Activated B cell treated with CpG ODN at 0.5 μM for 24 hours (primary cell): ENCODE measurements at regions of chr16 and their contacts with region 1.

Region 1: DNA sequence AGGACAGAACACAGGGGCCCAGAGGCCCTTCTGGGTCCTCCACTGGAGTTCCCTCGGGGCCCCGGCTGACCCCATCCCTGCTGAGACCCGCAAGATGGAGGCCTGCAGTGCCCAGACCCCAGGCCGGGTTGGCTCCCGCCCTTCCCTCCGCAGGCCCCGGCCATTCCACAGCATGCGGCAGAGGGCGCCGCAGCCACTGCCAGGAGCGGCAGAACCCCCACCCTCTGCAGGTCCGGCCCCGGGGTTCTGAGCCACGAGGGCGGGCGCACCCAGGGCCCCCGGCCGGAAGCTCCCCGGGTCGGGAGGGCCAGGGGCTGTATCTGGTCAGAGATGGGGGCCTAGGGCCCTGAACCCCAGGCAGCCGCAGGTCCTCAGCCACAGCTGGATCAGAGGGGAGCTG is 2.4 kb upstream of the PERCC1 start:
- DNase-seq: peak; percentile 62
- ATAC-seq: peak; percentile 93
- H3K4me3 Mint-ChIP-seq: no peak overlapping the region
- H3K27ac Mint-ChIP-seq: no peak overlapping the region
- H3K4me1 Mint-ChIP-seq: peaks cover 4% of the 10 kb centered on the region
- H3K27me3 Mint-ChIP-seq: no peaks in the 10 kb centered on the region
- CTCF ChIP-seq: no peak

Region 2: DNA sequence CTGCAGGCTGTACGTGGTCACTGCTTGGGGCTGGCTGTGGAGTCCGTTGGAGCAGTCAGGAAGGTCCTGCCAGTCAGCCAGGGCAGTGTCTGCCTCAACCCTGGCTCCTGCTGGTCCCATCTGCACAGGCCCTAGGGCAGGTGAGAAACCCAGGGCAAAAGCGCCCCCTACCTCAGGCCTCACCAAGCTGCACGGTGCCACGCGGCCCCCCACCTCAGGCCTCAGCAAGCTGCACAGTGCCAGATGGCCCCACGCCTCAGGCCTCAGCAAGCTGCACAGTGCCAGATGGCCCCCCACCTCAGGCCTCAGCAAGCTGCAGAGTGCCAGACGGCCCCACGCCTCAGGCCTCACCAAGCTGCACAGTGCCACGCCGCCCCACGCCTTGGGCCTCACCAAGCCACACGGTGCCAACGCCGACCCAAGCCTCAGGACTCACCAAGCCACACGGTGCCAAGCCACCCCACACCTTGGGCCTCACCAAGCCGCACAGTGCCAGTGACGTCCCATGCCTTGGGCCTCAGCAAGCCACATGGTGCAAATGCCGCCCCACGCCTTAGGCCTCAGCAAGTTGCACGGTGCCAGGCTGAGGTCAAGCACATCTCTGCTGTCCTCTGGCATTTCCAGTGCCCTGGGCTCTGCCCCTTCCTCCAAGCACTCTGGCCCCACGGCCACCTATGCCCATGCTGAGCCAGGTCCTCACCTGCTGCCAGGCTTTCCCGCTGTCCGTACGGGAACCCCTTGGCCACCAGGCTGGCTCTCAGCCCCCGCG is 110.5 kb after region 1 on chr16:
- CTCF ChIA-PET with region 1: interaction called, 7 read pairs
- POLR2A ChIA-PET with region 1: interaction called, 5 read pairs
- intact Hi-C with region 1: loop called (anchors 2 kb)
- DNase-seq: no peak
- ATAC-seq: peak; percentile 67
- H3K4me3 Mint-ChIP-seq: no peak overlapping the region
- H3K27ac Mint-ChIP-seq: no peak overlapping the region
- H3K4me1 Mint-ChIP-seq: peaks cover 26% of the 10 kb centered on the region
- H3K27me3 Mint-ChIP-seq: no peaks in the 10 kb centered on the region
- CTCF ChIP-seq: no peak

Region 3: DNA sequence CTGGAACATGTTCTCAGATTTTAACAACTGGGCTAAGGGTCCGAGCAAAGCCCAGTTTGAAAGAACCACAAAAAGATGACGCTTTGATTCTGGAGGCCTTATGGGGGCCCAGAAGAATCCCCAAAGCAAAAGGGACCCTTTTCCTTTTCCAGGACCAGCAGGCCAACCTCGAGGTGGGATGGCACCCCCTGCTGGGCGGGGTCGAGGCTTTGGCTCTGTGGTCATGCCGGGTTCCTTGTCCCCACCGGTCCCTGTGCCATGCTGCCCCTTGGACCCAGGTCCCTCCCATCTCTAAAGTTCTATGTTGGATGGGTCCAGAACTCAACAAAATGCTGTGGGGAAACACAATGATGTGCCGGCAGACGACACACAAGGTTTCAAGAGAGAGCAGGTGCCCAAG is 135.8 kb after region 1 on chr16:
- CTCF ChIA-PET with region 1: no interaction called
- POLR2A ChIA-PET with region 1: no interaction called
- intact Hi-C with region 1: loop called (anchors 5 kb)
- DNase-seq: no peak
- ATAC-seq: no peak
- H3K4me3 Mint-ChIP-seq: no peak overlapping the region
- H3K27ac Mint-ChIP-seq: no peak overlapping the region
- H3K4me1 Mint-ChIP-seq: no peaks in the 10 kb centered on the region
- H3K27me3 Mint-ChIP-seq: no peaks in the 10 kb centered on the region
- CTCF ChIP-seq: no peak